Naive thymus-derived CD4-positive, alpha-beta T cell (primary cell): ENCODE measurements at regions of chr2 and their contacts with region 1.

Region 1: GRCh38 chr2:218033590-218034496 is 31.0 kb upstream of the TNS1 start:
- DNase-seq: peak in 3 of 9 donors; percentile 3 to 21 (median 14)
- ATAC-seq: peak; percentile 16
- H3K4me3 ChIP-seq: peak overlapping the region; percentile 33
- H3K4me3 Mint-ChIP-seq: peak overlapping the region; percentile 51 to 85 (median 78)
- H3K27ac ChIP-seq: no peak overlapping the region
- H3K27ac Mint-ChIP-seq: peak overlapping the region in 6 of 9 donors; percentile 55 to 83 (median 76)
- H3K4me1 ChIP-seq: peaks cover 0 to 4% of the 10 kb centered on the region in 2 donors
- H3K4me1 Mint-ChIP-seq: peaks cover 0 to 15% (median 8%) of the 10 kb centered on the region in 7 donors
- H3K27me3 ChIP-seq: no peaks in the 10 kb centered on the region
- H3K27me3 Mint-ChIP-seq: peaks cover 0 to 4% (median 4%) of the 10 kb centered on the region in 5 donors

Region 2: GRCh38 chr2:217872319-217872718 is 161.5 kb before region 1 on chr2:
- CTCF ChIA-PET with region 1: no interaction called
- POLR2A ChIA-PET with region 1: no interaction called
- intact Hi-C with region 1: loop called in 1 of 2 experiments (anchors 5 kb)
- DNase-seq: no peak
- ATAC-seq: no peak
- H3K4me3 ChIP-seq: no peak overlapping the region
- H3K4me3 Mint-ChIP-seq: no peak overlapping the region
- H3K27ac ChIP-seq: no peak overlapping the region
- H3K27ac Mint-ChIP-seq: no peak overlapping the region
- H3K4me1 ChIP-seq: no peaks in the 10 kb centered on the region
- H3K4me1 Mint-ChIP-seq: no peaks in the 10 kb centered on the region
- H3K27me3 ChIP-seq: no peaks in the 10 kb centered on the region
- H3K27me3 Mint-ChIP-seq: peaks cover 0 to 5% (median 0%) of the 10 kb centered on the region in 5 donors

Region 3: DNA sequence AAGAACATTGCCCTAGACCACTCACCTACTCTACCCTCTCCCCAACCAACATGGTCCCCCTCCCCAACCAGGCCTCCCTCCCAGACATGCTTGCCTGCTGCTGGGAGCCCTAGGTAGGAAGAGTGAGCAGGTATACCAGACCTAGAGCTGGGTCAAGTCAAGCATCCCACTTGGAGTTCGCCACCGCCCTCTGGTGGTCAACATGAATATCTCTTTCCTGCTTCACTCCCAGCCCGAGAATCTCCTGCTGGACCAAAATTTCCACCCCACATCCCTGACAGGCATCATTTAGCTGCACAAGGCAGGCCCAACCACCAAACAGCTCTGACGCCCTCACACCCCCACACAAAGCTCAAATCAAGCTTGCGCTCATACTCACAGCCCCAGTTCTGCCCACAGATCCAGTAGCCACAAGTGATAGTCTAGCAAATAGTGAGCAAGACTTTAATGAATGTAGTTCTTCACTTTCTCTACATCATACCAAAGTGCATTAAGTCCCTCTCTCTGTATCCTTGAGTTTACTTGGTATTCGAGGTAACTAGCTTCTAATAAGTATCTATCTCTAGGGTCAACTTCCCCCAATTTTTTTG is 147.0 kb before region 1 on chr2:
- CTCF ChIA-PET with region 1: interaction called, 4 read pairs
- POLR2A ChIA-PET with region 1: no interaction called
- intact Hi-C with region 1: loop called in 1 of 2 experiments (anchors 2 kb)
- DNase-seq: peak; percentile 11 to 58 (median 41)
- ATAC-seq: peak; percentile 69
- H3K4me3 ChIP-seq: no peak overlapping the region
- H3K4me3 Mint-ChIP-seq: no peak overlapping the region
- H3K27ac ChIP-seq: no peak overlapping the region
- H3K27ac Mint-ChIP-seq: no peak overlapping the region
- H3K4me1 ChIP-seq: no peaks in the 10 kb centered on the region
- H3K4me1 Mint-ChIP-seq: peaks cover 0 to 4% (median 0%) of the 10 kb centered on the region in 7 donors
- H3K27me3 ChIP-seq: no peaks in the 10 kb centered on the region
- H3K27me3 Mint-ChIP-seq: peaks cover 0 to 9% (median 0%) of the 10 kb centered on the region in 5 donors

Region 4: GRCh38 chr2:217922101-217923006 is 111.5 kb before region 1 on chr2:
- CTCF ChIA-PET with region 1: no interaction called
- POLR2A ChIA-PET with region 1: no interaction called
- intact Hi-C with region 1: no loop called
- DNase-seq: no peak
- ATAC-seq: no peak
- H3K4me3 ChIP-seq: no peak overlapping the region
- H3K4me3 Mint-ChIP-seq: no peak overlapping the region
- H3K27ac ChIP-seq: no peak overlapping the region
- H3K27ac Mint-ChIP-seq: no peak overlapping the region
- H3K4me1 ChIP-seq: no peaks in the 10 kb centered on the region
- H3K4me1 Mint-ChIP-seq: no peaks in the 10 kb centered on the region
- H3K27me3 ChIP-seq: no peaks in the 10 kb centered on the region
- H3K27me3 Mint-ChIP-seq: peaks cover 0 to 3% (median 0%) of the 10 kb centered on the region in 5 donors

Region 5: DNA sequence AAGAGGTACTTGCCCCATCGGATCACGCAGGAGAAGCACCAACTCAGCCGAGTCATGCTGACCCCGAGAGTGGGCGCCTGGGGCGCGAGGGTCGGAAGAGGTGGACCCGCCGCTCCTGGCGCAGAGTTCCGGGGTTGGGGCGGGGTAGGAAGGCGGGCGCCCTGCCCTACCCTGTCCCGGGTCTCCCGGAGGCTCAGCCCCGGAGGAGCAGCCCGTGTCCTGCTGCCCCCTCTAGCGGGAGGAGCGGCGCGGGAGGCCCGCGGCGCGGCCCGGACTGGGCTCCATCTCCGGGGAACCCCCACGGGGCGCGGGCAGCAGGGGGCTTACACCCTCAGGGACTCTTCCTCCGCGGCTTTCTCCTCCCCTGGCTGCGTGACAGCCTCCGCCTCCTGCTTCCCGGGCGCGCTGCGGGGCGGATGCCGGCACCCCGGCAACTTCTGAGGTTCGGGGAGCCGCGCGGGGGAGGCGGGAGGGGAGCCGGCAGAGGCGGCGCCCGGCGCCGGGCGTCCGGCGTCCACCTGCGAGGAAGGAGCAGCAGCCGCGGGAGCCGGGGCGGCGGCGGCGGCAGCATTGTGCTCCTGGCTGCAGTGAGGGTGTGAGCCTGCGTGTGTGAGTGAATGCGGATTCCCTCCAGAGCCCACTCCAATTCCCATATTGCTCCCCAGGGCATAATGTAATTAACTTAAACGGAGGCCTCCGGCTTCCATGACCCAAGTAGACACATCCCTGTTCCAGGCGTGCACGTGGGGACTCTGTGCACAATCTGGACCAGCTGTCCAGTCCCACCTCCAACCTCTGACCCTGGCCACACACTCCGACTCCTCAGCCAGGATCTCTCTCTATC is 23.5 kb before region 1 on chr2:
- CTCF ChIA-PET with region 1: no interaction called
- POLR2A ChIA-PET with region 1: no interaction called
- intact Hi-C with region 1: loop called (anchors 1 to 2 kb)
- DNase-seq: peak in 7 of 9 donors; percentile 11 to 48 (median 19)
- ATAC-seq: peak; percentile 78
- H3K4me3 ChIP-seq: peak overlapping the region; percentile 46
- H3K4me3 Mint-ChIP-seq: peak overlapping the region; percentile 47 to 80 (median 72)
- H3K27ac ChIP-seq: no peak overlapping the region
- H3K27ac Mint-ChIP-seq: no peak overlapping the region
- H3K4me1 ChIP-seq: peaks cover 0 to 6% of the 10 kb centered on the region in 2 donors
- H3K4me1 Mint-ChIP-seq: peaks cover 0 to 14% (median 6%) of the 10 kb centered on the region in 7 donors
- H3K27me3 ChIP-seq: peaks cover 0 to 7% of the 10 kb centered on the region in 2 donors
- H3K27me3 Mint-ChIP-seq: peaks cover 28 to 58% (median 31%) of the 10 kb centered on the region in 5 donors

Region 6: GRCh38 chr2:218063486-218063885 is 29.6 kb after region 1 on chr2:
- CTCF ChIA-PET with region 1: no interaction called
- POLR2A ChIA-PET with region 1: no interaction called
- intact Hi-C with region 1: loop called in 1 of 2 experiments (anchors 1 kb)
- DNase-seq: no peak
- ATAC-seq: peak; percentile 88
- H3K4me3 ChIP-seq: no peak overlapping the region
- H3K4me3 Mint-ChIP-seq: no peak overlapping the region
- H3K27ac ChIP-seq: no peak overlapping the region
- H3K27ac Mint-ChIP-seq: no peak overlapping the region
- H3K4me1 ChIP-seq: peaks cover 0 to under 1% of the 10 kb centered on the region in 2 donors
- H3K4me1 Mint-ChIP-seq: peaks cover 0 to 14% (median under 1%) of the 10 kb centered on the region in 7 donors
- H3K27me3 ChIP-seq: no peaks in the 10 kb centered on the region
- H3K27me3 Mint-ChIP-seq: peaks cover 4 to 20% (median 19%) of the 10 kb centered on the region in 5 donors

Region 7: GRCh38 chr2:218927422-218927821 is 893.6 kb after region 1 on chr2:
- CTCF ChIA-PET with region 1: no interaction called
- POLR2A ChIA-PET with region 1: no interaction called
- intact Hi-C with region 1: no loop called
- DNase-seq: no peak
- ATAC-seq: no peak
- H3K4me3 ChIP-seq: no peak overlapping the region
- H3K4me3 Mint-ChIP-seq: no peak overlapping the region
- H3K27ac ChIP-seq: no peak overlapping the region
- H3K27ac Mint-ChIP-seq: no peak overlapping the region
- H3K4me1 ChIP-seq: no peaks in the 10 kb centered on the region
- H3K4me1 Mint-ChIP-seq: no peaks in the 10 kb centered on the region
- H3K27me3 ChIP-seq: no peaks in the 10 kb centered on the region
- H3K27me3 Mint-ChIP-seq: peaks cover 20 to 65% (median 48%) of the 10 kb centered on the region in 5 donors